ENCODE measurements at regions of chr11 and their contacts with region 1.

Region 1: DNA sequence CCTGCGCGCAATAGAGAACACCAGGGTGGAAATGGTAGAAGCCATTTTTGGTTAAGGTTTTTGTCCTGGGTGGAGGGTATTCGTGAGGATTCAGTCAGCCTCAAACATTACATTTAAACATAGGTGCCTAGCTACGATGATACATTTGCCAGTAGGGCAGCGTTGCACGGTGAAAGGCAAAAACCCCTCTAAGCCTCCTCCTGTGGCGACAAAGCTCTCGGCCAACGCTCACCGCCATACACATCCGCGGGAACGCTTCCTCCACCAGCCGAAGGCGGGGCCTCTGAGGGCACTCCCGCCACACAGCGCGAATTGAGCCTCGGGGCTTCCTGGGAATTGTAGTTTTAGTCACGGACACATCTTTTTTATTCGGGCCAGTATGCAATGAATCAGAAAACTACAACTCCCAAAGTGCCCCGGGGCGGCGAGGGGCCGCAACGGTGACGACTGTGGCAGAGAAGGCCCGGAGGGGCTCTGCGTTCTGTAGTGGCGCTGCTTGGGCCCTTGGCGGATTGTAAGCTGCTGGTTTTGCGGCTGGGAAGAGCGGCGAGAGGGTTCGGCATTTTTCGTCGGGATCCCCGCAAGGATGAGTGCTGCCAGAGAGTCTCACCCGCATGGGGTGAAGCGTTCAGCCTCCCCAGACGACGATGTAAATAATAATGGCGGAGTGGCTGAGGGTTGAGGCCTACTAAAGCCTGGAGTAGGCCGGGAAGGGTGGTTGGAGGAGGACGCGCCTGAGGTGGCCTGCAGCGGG is at the start of gene C11orf58:
- DNase-seq: peak; percentile 97
- H3K4me3 Mint-ChIP-seq: peak within 1 kb of the TSS; percentile 73
- H3K27ac Mint-ChIP-seq: peak within 1 kb of the TSS; percentile 85
- H3K4me1 Mint-ChIP-seq: peaks cover 22% of the 10 kb centered on the region
- H3K27me3 Mint-ChIP-seq: no peaks in the 10 kb centered on the region
- total RNA-seq, gene C11orf58: 114 to 123 TPM

Region 2: GRCh38 chr11:15053191-15053685 is 1685.1 kb before region 1 on chr11:
- CTCF ChIA-PET with region 1: no interaction called
- intact Hi-C with region 1: loop called (anchors 5 kb)
- DNase-seq: peak; percentile 75
- H3K4me3 Mint-ChIP-seq: no peak overlapping the region
- H3K27ac Mint-ChIP-seq: peak overlapping the region; percentile 83
- H3K4me1 Mint-ChIP-seq: peaks cover 26% of the 10 kb centered on the region
- H3K27me3 Mint-ChIP-seq: peaks cover 2% of the 10 kb centered on the region

Region 3: GRCh38 chr11:16321148-16321547 is 417.2 kb before region 1 on chr11:
- CTCF ChIA-PET with region 1: no interaction called
- intact Hi-C with region 1: no loop called
- DNase-seq: no peak
- H3K4me3 Mint-ChIP-seq: no peak overlapping the region
- H3K27ac Mint-ChIP-seq: no peak overlapping the region
- H3K4me1 Mint-ChIP-seq: no peaks in the 10 kb centered on the region
- H3K27me3 Mint-ChIP-seq: no peaks in the 10 kb centered on the region

Region 4: GRCh38 chr11:16605894-16606783 is 132.2 kb before region 1 on chr11:
- CTCF ChIA-PET with region 1: no interaction called
- intact Hi-C with region 1: loop called (anchors 1 kb)
- DNase-seq: peak; percentile 93
- H3K4me3 Mint-ChIP-seq: peak overlapping the region; percentile 56
- H3K27ac Mint-ChIP-seq: peak overlapping the region; percentile 15
- H3K4me1 Mint-ChIP-seq: peaks cover 20% of the 10 kb centered on the region
- H3K27me3 Mint-ChIP-seq: peaks cover 46% of the 10 kb centered on the region

Region 5: GRCh38 chr11:16669799-16670415 is 68.5 kb before region 1 on chr11:
- CTCF ChIA-PET with region 1: no interaction called
- intact Hi-C with region 1: no loop called
- DNase-seq: no peak
- H3K4me3 Mint-ChIP-seq: no peak overlapping the region
- H3K27ac Mint-ChIP-seq: no peak overlapping the region
- H3K4me1 Mint-ChIP-seq: no peaks in the 10 kb centered on the region
- H3K27me3 Mint-ChIP-seq: peaks cover 2% of the 10 kb centered on the region

Region 6: GRCh38 chr11:16749666-16750065 is 11.3 kb after region 1 on chr11:
- CTCF ChIA-PET with region 1: interaction called, 3 read pairs
- intact Hi-C with region 1: loop called (anchors 1 kb)
- DNase-seq: peak; percentile 27
- H3K4me3 Mint-ChIP-seq: no peak overlapping the region
- H3K27ac Mint-ChIP-seq: peak overlapping the region; percentile 72
- H3K4me1 Mint-ChIP-seq: peaks cover 38% of the 10 kb centered on the region
- H3K27me3 Mint-ChIP-seq: no peaks in the 10 kb centered on the region

Region 7: GRCh38 chr11:16902781-16903378 is 164.5 kb after region 1 on chr11:
- CTCF ChIA-PET with region 1: no interaction called
- intact Hi-C with region 1: loop called (anchors 2 kb)
- DNase-seq: peak; percentile 30
- H3K4me3 Mint-ChIP-seq: peak overlapping the region; percentile 3
- H3K27ac Mint-ChIP-seq: peak overlapping the region; percentile 92
- H3K4me1 Mint-ChIP-seq: peaks cover 43% of the 10 kb centered on the region
- H3K27me3 Mint-ChIP-seq: no peaks in the 10 kb centered on the region

Region 8: GRCh38 chr11:17207317-17208258 is 469.2 kb after region 1 on chr11 and contains the start of gene PIK3C2A:
- CTCF ChIA-PET with region 1: no interaction called
- intact Hi-C with region 1: loop called (anchors 1 kb)
- DNase-seq: peak; percentile 97
- H3K4me3 Mint-ChIP-seq: peak within 1 kb of the TSS; percentile 99
- H3K27ac Mint-ChIP-seq: peak within 1 kb of the TSS; percentile 92
- H3K4me1 Mint-ChIP-seq: peaks cover 30% of the 10 kb centered on the region
- H3K27me3 Mint-ChIP-seq: no peaks in the 10 kb centered on the region
- total RNA-seq, gene PIK3C2A: 16.4 to 17.3 TPM

Region 9: DNA sequence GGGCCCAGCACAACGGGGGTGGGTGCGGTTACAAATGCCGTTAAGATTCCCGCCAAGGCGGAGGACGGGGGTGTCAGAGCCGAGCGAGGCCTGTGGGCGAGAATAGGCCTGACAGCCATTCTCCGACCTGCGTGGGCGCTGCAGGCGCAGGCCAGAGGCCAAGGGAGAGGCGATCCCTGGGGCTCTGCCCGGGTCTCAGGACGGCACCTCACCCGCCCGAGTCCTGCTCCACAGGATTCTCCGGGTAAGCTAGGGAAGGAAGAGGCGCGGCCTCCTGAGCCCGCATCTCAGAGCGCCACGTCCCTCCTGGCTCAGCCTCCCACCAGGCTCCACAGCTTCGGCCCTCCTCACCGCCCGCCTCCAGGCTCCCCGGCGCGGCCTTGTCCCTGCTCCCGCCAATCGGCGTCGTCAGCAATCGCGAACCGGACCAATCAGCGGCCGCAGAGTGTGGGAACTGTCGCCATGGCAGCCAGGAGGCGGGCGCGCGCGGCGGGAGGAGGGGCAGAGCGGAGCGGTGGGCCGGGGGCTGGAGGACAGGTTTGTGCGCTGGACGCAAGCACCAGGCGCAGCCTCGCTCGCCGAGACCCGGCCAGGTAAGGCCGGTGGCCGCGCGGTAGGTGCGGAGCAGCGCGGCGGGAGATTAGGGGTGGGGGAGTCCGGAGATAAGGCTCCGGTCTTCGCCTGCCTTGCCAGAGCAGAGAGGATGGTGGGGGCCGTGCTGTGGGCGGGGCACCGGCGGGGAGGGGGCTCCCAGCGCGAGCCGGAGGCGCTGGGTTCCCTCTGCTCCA is 538.1 kb after region 1 on chr11 and contains the start of gene NUCB2:
- CTCF ChIA-PET with region 1: no interaction called
- intact Hi-C with region 1: loop called (anchors 2 kb)
- DNase-seq: peak; percentile 98
- H3K4me3 Mint-ChIP-seq: peak within 1 kb of the TSS; percentile 75
- H3K27ac Mint-ChIP-seq: peak within 1 kb of the TSS; percentile 83
- H3K4me1 Mint-ChIP-seq: peaks cover 33% of the 10 kb centered on the region
- H3K27me3 Mint-ChIP-seq: no peaks in the 10 kb centered on the region
- total RNA-seq, gene NUCB2: 67.7 to 74.0 TPM